ENCODE measurements at regions of chr17 and their contacts with region 1.

Region 1: GRCh38 chr17:81427173-81428120 is 32.2 kb downstream of the BAHCC1 start:
- DNase-seq: no peak
- H3K4me3 Mint-ChIP-seq: no peak overlapping the region
- H3K27ac Mint-ChIP-seq: no peak overlapping the region
- H3K4me1 Mint-ChIP-seq: no peaks in the 10 kb centered on the region
- H3K27me3 Mint-ChIP-seq: peaks cover 5% of the 10 kb centered on the region

Region 2: DNA sequence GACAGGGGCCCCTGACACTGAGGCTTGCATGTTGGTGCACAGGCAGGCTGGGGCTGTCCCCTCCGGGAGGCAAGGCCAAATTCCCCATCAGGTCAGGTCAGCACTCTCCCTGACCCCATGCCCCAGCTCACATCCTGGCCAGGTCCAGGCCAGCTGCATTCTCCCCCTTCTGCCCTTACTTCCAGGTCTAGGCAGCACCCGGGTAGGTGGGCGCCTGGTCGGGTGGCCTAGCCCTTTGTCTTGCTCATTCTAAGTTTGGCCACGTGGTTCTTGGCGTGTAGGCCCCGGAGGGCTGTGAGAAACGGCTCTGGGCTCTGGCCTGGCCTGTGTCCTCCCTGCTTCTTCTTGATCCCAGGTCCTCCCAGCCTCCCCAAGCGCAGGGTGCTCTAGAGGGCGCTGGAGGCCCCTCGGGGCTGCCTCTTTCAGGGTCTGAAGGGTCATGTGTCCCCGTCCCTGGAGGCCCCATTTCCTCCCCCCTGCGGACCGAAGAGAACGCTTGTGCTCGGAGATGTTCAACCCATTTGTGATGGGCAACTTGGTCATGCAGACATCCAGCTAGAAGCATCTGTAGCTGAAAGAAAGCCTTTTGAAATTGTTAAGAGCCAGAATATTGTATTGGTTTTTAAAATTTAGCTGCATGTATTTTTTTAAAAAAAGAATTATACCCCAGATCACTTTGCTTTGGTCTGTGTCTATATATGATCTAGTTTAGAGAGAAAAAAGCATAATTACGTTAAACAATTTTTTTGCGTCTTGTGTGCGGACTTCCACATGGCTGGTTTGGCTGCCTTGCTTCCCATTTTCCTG is 25.5 kb before region 1 on chr17:
- intact Hi-C with region 1: loop called (anchors 2 kb)
- DNase-seq: no peak
- H3K4me3 Mint-ChIP-seq: no peak overlapping the region
- H3K27ac Mint-ChIP-seq: no peak overlapping the region
- H3K4me1 Mint-ChIP-seq: peaks cover 5% of the 10 kb centered on the region
- H3K27me3 Mint-ChIP-seq: peaks cover 57% of the 10 kb centered on the region

Measured in activated T-helper 1 cell treated with anti-CD3 and anti-CD28 coated beads, Interleukin-12 subunit alpha, Interleukin-12 subunit beta, Interleukin-2, Interleukin-4 antibody, amounts not matched to agents 30 ng/mL and 10 ng/mL and 1 ng/mL, durations not matched to agents 14 hours and 24 hours and 36 hours (primary cell).